ENCODE measurements at regions of chr5 and their contacts with region 1.

Region 1: DNA sequence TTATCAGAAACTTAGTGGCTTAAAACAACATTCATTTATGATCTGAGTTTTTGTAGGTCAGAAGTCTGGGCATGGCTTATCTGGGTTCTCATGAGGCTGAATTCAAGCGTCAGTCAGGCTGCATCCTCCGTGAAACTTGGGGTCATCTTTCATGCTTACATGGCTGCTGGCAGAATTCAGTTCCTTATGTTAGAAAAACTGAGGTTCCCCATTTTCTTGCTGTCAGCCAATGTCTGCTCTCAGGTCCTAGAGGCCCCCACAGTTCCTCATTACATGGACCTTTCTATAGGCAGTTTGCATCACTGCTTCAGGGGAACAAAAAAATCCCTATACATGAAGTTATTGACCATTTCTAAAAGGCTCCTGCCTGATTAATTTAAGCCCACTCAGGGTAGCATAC is 83.8 kb upstream of the NMUR2 start:
- DNase-seq: no peak
- ATAC-seq: no peak

Region 2: GRCh38 chr5:152427721-152428120 is 61.1 kb before region 1 on chr5:
- intact Hi-C with region 1: no loop called
- DNase-seq: no peak
- ATAC-seq: no peak

Region 3: DNA sequence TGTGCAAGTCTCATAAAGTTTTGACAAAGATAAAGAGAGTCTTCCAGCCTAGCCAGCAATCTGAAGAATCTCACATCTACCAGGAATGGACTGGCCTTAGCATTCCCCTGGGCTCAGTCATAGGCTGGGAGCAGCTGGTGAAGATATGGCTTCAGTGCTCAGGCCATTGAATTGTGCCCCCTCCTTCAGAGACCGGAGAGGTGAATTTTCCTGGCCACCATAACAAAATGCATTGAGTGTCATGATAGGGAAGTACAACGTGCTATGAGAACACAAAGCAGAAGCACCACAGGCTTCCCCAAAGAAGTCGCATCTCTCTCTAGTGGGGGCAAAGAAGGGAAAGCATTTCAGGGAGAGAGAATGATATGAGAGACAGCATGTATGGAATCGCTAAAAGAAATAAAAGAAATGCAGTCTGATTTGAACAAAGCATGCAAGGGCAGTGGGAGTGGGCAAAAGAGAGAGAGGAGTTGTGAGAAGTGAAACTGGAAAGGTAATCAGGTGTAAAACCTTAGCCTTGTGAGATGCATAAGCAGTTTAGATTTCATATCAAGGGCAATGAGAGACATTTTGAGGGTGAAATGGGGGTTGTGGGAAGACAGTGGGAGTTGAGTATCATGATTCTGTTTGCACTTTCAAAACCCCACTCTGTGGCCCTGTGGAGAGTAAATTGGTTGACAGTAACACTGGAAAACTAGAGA is 26.7 kb before region 1 on chr5:
- intact Hi-C with region 1: no loop called
- DNase-seq: no peak
- ATAC-seq: no peak

Region 4: GRCh38 chr5:153050496-153051179 is 561.8 kb after region 1 on chr5:
- intact Hi-C with region 1: loop called (anchors 5 kb)
- DNase-seq: no peak
- ATAC-seq: no peak

Measured in sciatic nerve (tissue), 2 donors.